ENCODE measurements at regions of chr2 and their contacts with region 1.

Region 1: GRCh38 chr2:157245846-157246764 is 11.4 kb upstream of the GALNT5 start:
- DNase-seq: no peak
- H3K4me3 Mint-ChIP-seq: no peak overlapping the region
- H3K27ac Mint-ChIP-seq: peak overlapping the region; percentile 56
- H3K4me1 Mint-ChIP-seq: peaks cover 17% of the 10 kb centered on the region
- H3K27me3 Mint-ChIP-seq: peaks cover 10% of the 10 kb centered on the region

Region 2: DNA sequence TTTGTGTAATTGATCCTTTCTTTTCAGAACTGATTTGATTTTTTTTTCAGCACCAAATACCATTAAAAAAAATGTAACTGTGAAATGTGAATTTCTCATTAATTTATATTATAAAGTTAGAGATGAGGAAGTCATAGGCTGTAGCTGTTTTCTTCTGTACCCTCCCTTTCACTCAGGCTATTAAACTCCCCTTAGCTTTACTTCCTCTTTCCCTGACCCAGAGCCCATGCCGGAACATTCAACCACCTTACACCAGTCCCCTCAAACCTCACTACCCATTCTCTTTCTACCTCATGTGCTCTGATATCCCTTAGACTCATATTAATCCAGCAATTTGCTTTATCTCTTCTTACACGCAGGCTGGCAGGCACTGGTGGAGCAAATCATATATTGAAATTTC is 23.8 kb after region 1 on chr2:
- intact Hi-C with region 1: loop called (anchors 1 kb)
- DNase-seq: no peak
- H3K4me3 Mint-ChIP-seq: no peak overlapping the region
- H3K27ac Mint-ChIP-seq: no peak overlapping the region
- H3K4me1 Mint-ChIP-seq: peaks cover 18% of the 10 kb centered on the region
- H3K27me3 Mint-ChIP-seq: peaks cover 3% of the 10 kb centered on the region